Dorsolateral prefrontal cortex (tissue), 120 donors: ENCODE measurements at regions of chr1 and their contacts with region 1.

Region 1: DNA sequence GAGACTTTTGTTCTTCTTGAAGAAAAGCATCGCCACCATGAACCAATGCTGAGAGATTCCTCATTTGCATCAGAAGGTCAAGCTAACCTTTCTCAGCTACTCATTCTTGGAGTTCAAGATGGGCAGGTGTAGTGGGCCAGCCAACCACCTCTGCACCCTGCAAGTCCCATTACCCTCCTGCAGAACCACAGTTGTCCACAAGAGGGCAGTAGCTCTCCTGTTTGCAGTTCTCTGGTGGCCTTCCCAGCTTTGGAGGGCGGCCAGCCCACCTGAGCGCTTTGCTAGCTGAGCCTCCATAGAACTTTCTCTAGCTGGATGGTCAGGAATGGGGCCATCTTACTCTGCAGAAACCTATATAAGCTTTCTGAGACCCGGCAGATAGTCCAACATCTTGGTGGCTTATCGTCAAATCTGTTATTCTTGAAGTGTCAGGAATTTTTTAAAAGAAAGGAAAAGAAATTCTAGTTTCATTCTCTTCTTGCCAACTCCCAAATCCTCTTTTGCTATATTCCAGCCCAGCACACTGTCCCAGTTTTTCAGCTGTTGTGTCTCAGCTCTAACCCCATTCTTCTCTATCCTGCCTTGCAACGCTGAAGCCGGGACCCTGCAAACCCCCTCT is 11.0 kb upstream of the LMX1A start:
- DNase-seq: peak in 9 of 10 donors; percentile 43 to 80 (median 66)
- H3K4me3 ChIP-seq: no peak overlapping the region
- H3K27ac ChIP-seq: no peak overlapping the region
- H3K27me3 ChIP-seq: peaks cover 0 to 37% (median 12%) of the 10 kb centered on the region in 45 donors
- CTCF ChIP-seq: peak; percentile 62 to 95 (median 88)

Region 2: DNA sequence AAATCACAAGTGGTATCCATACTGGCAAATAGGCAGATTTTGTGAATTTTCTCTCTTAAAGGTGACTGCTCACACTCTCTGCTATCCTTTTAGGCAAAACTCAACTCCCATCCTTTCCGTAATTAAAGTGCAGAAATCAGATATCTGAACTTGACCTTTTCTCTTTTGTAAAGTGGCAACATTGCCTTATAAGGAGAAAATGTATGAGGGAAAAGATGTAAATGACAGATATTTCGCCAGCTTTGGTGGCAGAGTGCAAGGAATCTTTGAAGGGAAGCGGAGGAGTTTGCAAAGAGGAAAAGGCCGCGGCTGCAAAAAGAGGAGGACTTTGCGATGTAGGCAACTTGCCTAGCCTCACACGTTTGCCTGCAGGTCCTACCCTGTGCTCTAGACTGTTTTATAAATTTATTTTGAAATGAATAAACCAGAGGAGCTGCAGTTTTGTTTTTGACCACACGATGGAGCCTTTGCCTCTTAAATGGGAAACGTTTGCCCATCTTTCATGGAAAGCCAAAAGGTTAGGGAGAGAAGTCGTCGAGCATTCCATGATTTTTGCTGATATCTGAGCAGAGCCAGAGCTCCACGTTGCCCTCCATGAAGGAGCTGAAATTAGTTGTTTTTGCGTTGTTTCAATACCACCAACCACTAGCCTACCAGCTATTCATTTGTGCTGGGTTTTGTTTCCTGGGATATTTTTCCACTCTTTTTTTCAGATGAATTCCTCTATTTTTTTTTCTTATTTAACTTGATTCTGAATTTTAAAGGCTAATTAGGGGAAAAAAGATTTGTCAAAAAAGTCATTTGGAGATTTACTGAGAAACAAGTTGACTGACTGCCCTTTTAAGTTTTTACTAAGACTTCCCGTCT is 253.2 kb before region 1 on chr1:
- intact Hi-C with region 1: loop called in 1 of 2 experiments (anchors 10 kb)
- DNase-seq: peak in 4 of 10 donors; percentile 18 to 72 (median 42)
- H3K4me3 ChIP-seq: no peak overlapping the region
- H3K27ac ChIP-seq: no peak overlapping the region
- H3K27me3 ChIP-seq: peaks cover 0 to 51% (median 21%) of the 10 kb centered on the region in 45 donors
- CTCF ChIP-seq: peak; percentile 59 to 97 (median 79)

Region 3: GRCh38 chr1:165144757-165145397 is 222.6 kb before region 1 on chr1:
- intact Hi-C with region 1: loop called (anchors 2 to 5 kb)
- DNase-seq: peak in 8 of 10 donors; percentile 34 to 63 (median 54)
- H3K4me3 ChIP-seq: no peak overlapping the region
- H3K27ac ChIP-seq: no peak overlapping the region
- H3K27me3 ChIP-seq: peaks cover 0 to 39% (median 8%) of the 10 kb centered on the region in 45 donors
- CTCF ChIP-seq: peak; percentile 50 to 89 (median 81)

Region 4: DNA sequence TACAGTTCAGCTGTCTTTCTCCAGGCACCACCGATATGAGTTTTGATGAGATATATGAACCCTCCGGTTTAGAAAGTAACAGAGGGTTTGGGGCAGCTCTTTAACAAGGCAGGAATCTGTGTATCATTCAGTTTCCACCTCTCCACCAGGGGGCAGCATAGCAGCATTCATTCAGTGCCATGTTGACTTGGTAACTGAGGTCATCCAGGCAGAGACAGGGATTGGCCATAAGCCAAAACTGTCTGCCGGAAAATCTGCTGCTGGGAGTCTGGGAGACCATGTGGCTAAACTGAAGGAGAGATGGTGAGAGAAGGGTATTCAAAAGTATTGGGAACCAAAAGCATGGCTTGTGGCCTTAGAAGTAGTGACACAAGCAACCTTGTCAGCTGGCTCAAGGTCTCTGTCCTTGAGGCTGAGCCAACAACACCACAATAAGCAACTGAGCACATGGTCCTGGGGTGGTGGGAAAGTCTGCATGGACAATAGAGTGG is 109.5 kb before region 1 on chr1:
- intact Hi-C with region 1: loop called in 1 of 2 experiments (anchors 10 kb)
- DNase-seq: peak in 5 of 10 donors; percentile 15 to 60 (median 39)
- H3K4me3 ChIP-seq: no peak overlapping the region
- H3K27ac ChIP-seq: no peak overlapping the region
- H3K27me3 ChIP-seq: peaks cover 0 to 37% (median 12%) of the 10 kb centered on the region in 45 donors
- CTCF ChIP-seq: peak in 52 of 56 donors; percentile 16 to 71 (median 54)